Mammary epithelial cell (primary cell): ENCODE measurements at regions of chr14 and their contacts with region 1.

Region 1: DNA sequence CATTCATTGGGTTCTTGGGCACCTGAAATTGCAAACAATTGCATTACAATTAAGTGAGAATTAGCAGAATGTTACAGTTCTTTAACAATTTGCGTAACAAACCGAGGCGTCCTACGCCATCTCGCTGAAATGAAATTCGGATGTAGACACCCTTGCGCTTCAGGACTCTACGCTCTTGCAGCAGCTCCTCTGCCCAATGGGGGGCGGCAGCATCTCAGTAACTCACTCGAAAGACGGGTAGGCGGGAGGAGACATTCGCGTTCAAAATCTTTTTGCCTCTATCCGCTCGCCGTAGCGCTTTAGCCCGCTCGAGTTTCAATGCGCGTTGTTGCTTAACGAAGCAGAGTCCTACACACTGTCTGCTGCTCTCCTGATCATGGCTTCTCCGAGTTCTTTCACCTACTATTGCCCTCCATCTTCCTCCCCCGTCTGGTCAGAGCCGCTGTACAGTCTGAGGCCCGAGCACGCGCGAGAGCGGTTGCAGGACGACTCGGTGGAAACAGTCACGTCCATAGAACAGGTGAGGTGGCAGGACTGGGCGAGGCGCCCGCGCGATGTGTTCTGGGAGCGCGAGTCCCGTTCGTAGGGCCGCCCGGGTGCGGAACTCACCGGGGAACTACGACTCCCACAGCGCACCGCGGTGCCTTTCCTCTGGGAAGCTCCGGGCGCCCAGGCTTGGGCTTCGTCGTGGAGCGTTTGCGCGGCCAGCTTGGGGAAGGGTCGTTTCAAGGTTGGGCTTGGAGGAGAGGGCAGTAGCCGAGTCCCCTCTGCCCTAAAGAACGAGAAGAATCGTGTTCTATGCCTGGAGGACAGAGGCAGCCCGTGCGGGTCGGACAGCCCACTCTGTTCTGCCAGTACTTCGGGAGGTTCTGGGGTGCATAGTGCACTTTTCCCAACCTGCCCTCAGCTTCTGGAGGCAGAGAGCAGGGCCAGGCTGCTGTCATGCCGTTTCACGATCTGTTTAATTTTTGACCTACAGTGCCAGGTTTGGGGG is at the start of gene FNTB:
- DNase-seq: peak; percentile 95
- H3K4me3 ChIP-seq: peak within 1 kb of the TSS; percentile 79 to 86 (median 83)
- H3K27ac ChIP-seq: peak within 1 kb of the TSS; percentile 61
- H3K4me1 ChIP-seq: peaks cover 6% of the 10 kb centered on the region
- H3K27me3 ChIP-seq: no peaks in the 10 kb centered on the region
- CTCF ChIP-seq: peak; percentile 95 to 97
- total RNA-seq, gene FNTB: 11.7 to 12.5 TPM

Region 2: GRCh38 chr14:64823305-64823861 is 163.5 kb before region 1 on chr14:
- CTCF ChIA-PET with region 1: no interaction called
- dilution Hi-C with region 1: no loop called
- in situ Hi-C with region 1: no loop called
- intact Hi-C with region 1: loop called (anchors 1 kb)
- DNase-seq: peak; percentile 56
- H3K4me3 ChIP-seq: no peak overlapping the region
- H3K27ac ChIP-seq: no peak overlapping the region
- H3K4me1 ChIP-seq: peaks cover 9% of the 10 kb centered on the region
- H3K27me3 ChIP-seq: peaks cover 4% of the 10 kb centered on the region
- CTCF ChIP-seq: peak; percentile 53 to 86

Region 3: GRCh38 chr14:65019944-65020566 is 33.2 kb after region 1 on chr14:
- CTCF ChIA-PET with region 1: interaction called, 24 read pairs
- dilution Hi-C with region 1: loop called (anchors 5 kb)
- in situ Hi-C with region 1: no loop called
- intact Hi-C with region 1: loop called (anchors 1 kb)
- DNase-seq: peak; percentile 62
- H3K4me3 ChIP-seq: no peak overlapping the region
- H3K27ac ChIP-seq: no peak overlapping the region
- H3K4me1 ChIP-seq: no peaks in the 10 kb centered on the region
- H3K27me3 ChIP-seq: no peaks in the 10 kb centered on the region
- CTCF ChIP-seq: peak; percentile 64 to 68

Region 4: GRCh38 chr14:65102441-65103149 is 115.7 kb after region 1 on chr14 and contains the start of gene MAX:
- CTCF ChIA-PET with region 1: no interaction called
- dilution Hi-C with region 1: no loop called
- in situ Hi-C with region 1: no loop called
- intact Hi-C with region 1: loop called (anchors 5 kb)
- DNase-seq: peak; percentile 98
- H3K4me3 ChIP-seq: peak within 1 kb of the TSS; percentile 89 to 96 (median 92)
- H3K27ac ChIP-seq: peak within 1 kb of the TSS; percentile 65
- H3K4me1 ChIP-seq: peaks cover 11% of the 10 kb centered on the region
- H3K27me3 ChIP-seq: no peaks in the 10 kb centered on the region
- CTCF ChIP-seq: no peak
- total RNA-seq, gene MAX: 36.0 to 84.7 TPM